Panc1 (cell line): ENCODE measurements at regions of chr3 and their contacts with region 1.

Region 1: GRCh38 chr3:8622873-8623691 is 21.5 kb downstream of the SSUH2 start:
- DNase-seq: no peak
- ATAC-seq: peak; percentile 87
- H3K4me3 ChIP-seq: no peak overlapping the region
- H3K27ac ChIP-seq: 0 out of 2 replicates have a peak overlapping the region, but pooled peaks have one; percentile 34
- H3K4me1 ChIP-seq: peaks cover 6% of the 10 kb centered on the region
- H3K27me3 ChIP-seq: no peaks in the 10 kb centered on the region
- CTCF ChIP-seq: peak; percentile 89

Region 2: GRCh38 chr3:8204853-8205650 is 418.0 kb before region 1 on chr3:
- CTCF ChIA-PET with region 1: no interaction called
- POLR2A ChIA-PET with region 1: no interaction called
- in situ Hi-C with region 1: no loop called
- intact Hi-C with region 1: no loop called
- DNase-seq: no peak
- ATAC-seq: no peak
- H3K4me3 ChIP-seq: no peak overlapping the region
- H3K27ac ChIP-seq: no peak overlapping the region
- H3K4me1 ChIP-seq: no peaks in the 10 kb centered on the region
- H3K27me3 ChIP-seq: no peaks in the 10 kb centered on the region
- CTCF ChIP-seq: no peak

Region 3: DNA sequence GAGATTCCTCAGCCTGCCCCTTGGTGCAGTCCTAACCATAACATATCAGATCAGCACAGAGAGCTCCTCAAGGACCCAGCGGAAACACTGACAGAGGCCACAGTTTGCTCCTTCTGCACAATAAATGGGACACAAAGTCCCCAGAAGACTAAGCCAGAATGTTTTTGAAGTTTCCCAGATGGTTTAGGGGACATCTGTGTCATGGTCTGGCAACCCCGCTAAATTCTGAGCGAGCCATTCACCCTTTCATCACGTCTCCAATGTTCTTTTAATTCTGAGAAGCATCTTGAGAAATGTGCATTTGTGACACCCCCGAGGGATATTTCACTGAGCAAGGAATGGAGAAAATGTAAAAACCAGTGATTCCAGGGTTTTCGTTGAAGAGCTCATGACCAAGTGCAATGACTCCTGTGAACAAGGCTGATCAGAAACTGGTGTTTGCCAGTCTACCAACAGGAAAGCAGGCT is 186.3 kb before region 1 on chr3:
- CTCF ChIA-PET with region 1: interaction called, 3 read pairs
- POLR2A ChIA-PET with region 1: interaction called, 14 read pairs
- in situ Hi-C with region 1: no loop called
- intact Hi-C with region 1: no loop called
- DNase-seq: no peak
- ATAC-seq: no peak
- H3K4me3 ChIP-seq: no peak overlapping the region
- H3K27ac ChIP-seq: no peak overlapping the region
- H3K4me1 ChIP-seq: no peaks in the 10 kb centered on the region
- H3K27me3 ChIP-seq: no peaks in the 10 kb centered on the region
- CTCF ChIP-seq: no peak

Region 4: DNA sequence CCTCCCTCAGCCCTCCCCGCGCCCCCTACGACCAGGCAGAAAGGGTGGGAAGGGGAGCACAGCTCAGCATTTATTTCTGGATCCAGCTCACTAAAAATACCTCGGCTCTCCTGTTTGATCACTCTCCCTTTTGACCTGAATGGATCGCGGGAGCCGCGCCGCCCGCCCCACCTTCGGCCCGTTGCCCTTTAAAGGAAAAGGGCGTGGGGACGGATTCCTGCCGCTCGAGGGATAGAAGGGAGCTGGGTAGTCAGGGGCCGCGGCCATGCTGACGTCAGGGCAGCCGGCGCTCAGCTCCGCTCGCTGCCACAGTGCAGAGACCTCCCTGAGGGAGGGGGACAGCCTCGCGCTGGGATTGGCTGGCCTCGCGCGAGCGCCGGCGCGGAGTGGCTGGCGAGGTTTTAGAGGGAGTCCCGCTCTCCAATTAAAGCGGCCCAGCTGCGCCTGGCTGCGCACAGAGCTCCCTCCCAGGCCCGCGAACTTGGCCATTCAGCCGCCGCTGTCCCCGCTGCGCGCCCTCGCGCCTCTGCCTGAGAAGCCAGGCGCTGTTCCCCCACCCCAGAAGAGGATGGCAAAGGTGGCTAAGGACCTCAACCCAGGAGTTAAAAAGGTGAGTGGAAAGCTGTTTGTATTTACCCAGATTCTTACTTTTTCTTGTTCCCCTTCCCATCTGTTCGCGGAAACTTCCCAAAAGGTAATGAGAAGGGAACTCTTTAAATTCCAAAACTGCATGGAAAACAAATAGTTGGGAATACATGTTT is 121.5 kb before region 1 on chr3 and contains the start of gene LMCD1:
- CTCF ChIA-PET with region 1: no interaction called
- POLR2A ChIA-PET with region 1: no interaction called
- in situ Hi-C with region 1: no loop called
- intact Hi-C with region 1: loop called (anchors 5 kb)
- DNase-seq: no peak
- ATAC-seq: peak; percentile 96
- H3K4me3 ChIP-seq: peak within 1 kb of the TSS; percentile 61 to 74
- H3K27ac ChIP-seq: peak within 1 kb of the TSS; percentile 83
- H3K4me1 ChIP-seq: peaks cover 54% of the 10 kb centered on the region
- H3K27me3 ChIP-seq: no peaks in the 10 kb centered on the region
- CTCF ChIP-seq: no peak
- total RNA-seq, gene LMCD1: 24.8 TPM